Activated CD4-positive, alpha-beta T cell treated with anti-CD3 and anti-CD28 coated beads, Interleukin-2, amount 10 ng/mL, durations not matched to agents 7 days and 5 days (primary cell): ENCODE measurements at regions of chr1 and their contacts with region 1.

Region 1: DNA sequence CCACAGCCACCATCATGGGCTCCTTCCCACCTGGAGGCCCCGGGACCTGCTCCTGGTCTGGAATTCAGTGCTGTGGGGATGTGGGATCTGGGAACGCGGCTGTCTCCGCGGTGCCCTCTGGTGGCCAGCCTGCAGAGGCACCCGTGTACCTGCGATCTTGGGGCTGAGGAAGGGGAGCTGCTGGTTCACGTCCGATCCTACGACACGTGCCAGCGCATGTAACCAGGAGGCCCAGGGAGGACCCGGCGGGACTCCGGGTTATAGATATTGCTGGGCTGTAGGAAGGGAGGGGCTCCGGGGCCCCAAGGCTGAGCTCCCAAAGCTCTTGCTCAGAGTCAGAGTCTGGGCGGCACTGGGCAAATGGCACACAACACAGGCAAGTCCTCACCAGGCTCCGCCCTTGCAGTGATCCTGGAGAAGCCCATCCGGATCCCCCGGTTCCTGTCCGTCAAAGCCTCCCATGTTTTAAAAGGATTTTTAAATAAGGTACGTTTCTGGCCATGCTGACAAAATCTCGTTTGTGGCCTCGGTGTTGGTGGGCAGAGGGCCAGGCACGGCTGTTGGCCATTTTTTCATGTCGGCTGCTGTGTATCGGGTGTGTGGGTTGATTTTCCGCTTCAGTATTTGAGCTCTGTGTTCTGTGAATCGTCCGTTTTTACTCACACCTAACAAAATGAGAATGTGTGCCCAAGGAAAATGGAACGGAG is 20.1 kb downstream of the FAAP20 start:
- DNase-seq: peak; percentile 37
- H3K4me3 Mint-ChIP-seq: no peak overlapping the region
- H3K27ac Mint-ChIP-seq: no peak overlapping the region
- H3K4me1 Mint-ChIP-seq: peaks cover 2% of the 10 kb centered on the region
- H3K27me3 Mint-ChIP-seq: no peaks in the 10 kb centered on the region

Region 2: DNA sequence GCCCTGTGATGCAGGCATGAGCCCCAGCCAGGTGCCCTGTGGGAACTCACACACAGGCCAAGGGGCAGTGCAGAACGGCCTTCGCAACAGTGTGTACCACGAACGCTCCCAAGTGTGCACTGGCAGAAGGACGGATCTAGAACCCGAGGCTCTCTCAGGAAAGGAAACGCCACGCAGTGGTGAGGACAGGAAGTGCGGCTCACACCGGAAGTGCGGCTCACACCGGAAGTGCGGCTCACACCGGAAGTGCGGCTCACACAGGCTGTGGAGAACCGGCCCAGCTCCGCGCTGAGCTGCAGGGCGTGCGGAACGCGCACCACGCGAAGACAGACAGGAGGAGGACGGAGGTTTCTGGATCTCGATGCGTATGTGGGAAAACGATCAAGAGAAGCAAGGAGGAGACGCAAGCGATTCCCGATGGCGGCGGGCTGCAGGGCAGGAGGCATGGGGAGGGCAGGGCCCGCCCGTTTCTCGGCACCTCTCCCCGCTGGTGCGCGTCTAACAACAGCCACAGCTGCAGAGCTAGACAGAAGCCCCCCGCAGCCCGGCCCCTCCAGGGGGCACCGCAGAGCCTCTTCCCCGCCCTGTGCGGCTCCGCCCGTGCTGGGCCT is 219.6 kb before region 1 on chr1:
- CTCF ChIA-PET with region 1: no interaction called
- POLR2A ChIA-PET with region 1: no interaction called
- DNase-seq: no peak
- H3K4me3 Mint-ChIP-seq: no peak overlapping the region
- H3K27ac Mint-ChIP-seq: no peak overlapping the region
- H3K4me1 Mint-ChIP-seq: peaks cover 5% of the 10 kb centered on the region
- H3K27me3 Mint-ChIP-seq: no peaks in the 10 kb centered on the region

Region 3: GRCh38 chr1:2141036-2141435 is 33.5 kb before region 1 on chr1:
- CTCF ChIA-PET with region 1: interaction called, 10 read pairs
- POLR2A ChIA-PET with region 1: no interaction called
- DNase-seq: no peak
- H3K4me3 Mint-ChIP-seq: no peak overlapping the region
- H3K27ac Mint-ChIP-seq: no peak overlapping the region
- H3K4me1 Mint-ChIP-seq: peaks cover 9% of the 10 kb centered on the region
- H3K27me3 Mint-ChIP-seq: no peaks in the 10 kb centered on the region

Region 4: GRCh38 chr1:2148691-2149090 is 25.8 kb before region 1 on chr1:
- CTCF ChIA-PET with region 1: interaction called, 10 read pairs
- POLR2A ChIA-PET with region 1: no interaction called
- DNase-seq: peak; percentile 82
- H3K4me3 Mint-ChIP-seq: no peak overlapping the region
- H3K27ac Mint-ChIP-seq: no peak overlapping the region
- H3K4me1 Mint-ChIP-seq: peaks cover 16% of the 10 kb centered on the region
- H3K27me3 Mint-ChIP-seq: no peaks in the 10 kb centered on the region

Region 5: DNA sequence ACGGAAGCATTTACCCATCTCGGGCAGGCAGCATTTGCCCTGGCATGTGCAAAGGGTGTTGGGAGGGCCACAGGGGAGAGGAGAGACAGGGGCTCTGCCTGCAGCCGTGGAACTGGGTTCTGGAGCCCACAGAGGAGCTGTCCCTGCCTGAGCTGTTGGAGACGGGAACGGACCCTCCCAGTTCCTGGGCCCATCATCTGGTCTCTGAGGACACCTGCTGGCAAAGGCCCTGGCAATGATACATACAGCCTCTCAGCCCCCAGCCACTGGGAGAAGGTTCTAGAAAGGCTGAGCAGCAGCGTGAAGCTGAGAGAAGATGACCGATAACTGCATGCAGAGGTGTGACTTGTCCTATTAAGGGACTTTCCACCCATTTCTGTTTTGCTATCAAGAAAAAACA is 11.3 kb before region 1 on chr1:
- CTCF ChIA-PET with region 1: interaction called, 13 read pairs
- POLR2A ChIA-PET with region 1: no interaction called
- DNase-seq: no peak
- H3K4me3 Mint-ChIP-seq: no peak overlapping the region
- H3K27ac Mint-ChIP-seq: no peak overlapping the region
- H3K4me1 Mint-ChIP-seq: peaks cover 6% of the 10 kb centered on the region
- H3K27me3 Mint-ChIP-seq: no peaks in the 10 kb centered on the region

Region 6: DNA sequence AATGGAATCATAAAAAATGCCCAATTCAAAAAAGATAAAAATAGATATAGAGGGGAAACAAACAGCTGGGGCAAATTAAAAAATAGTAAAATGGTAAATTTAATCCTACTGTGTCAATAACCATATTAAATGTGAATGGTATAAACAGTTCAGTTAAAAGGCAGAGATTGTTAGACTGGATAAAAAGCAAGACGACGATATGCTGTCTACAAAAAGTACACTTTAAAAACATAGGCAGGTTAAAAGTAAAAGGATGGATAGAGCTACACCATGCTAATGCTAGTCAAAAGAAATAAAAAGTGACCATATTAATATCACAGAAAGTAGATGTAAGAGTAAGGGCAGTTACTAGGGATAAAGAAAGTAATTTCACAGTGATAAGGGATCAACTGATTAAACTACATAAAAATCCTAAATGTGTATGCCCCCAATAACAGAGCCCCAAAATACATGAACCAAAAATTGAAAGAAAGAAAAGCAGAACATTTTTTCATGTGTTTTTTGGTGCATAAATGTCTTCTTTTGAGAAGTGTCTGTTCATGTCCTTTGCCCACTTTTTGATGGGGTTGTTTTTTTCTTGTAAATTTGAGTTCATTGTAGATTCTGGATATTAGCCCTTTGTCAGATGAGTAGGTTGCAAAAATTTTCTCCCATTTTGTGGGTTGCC is 189.5 kb after region 1 on chr1:
- CTCF ChIA-PET with region 1: no interaction called
- POLR2A ChIA-PET with region 1: no interaction called
- DNase-seq: no peak
- H3K4me3 Mint-ChIP-seq: no peak overlapping the region
- H3K27ac Mint-ChIP-seq: no peak overlapping the region
- H3K4me1 Mint-ChIP-seq: no peaks in the 10 kb centered on the region
- H3K27me3 Mint-ChIP-seq: peaks cover 5% of the 10 kb centered on the region